ENCODE measurements at regions of chr19 and their contacts with region 1.

Region 1: GRCh38 chr19:8641908-8642547 is 11.6 kb downstream of the NFILZ start:
- DNase-seq: no peak
- H3K4me3 Mint-ChIP-seq: no peak overlapping the region
- H3K27ac Mint-ChIP-seq: no peak overlapping the region
- H3K4me1 Mint-ChIP-seq: no peaks in the 10 kb centered on the region
- H3K27me3 Mint-ChIP-seq: peaks cover 11% of the 10 kb centered on the region

Region 2: DNA sequence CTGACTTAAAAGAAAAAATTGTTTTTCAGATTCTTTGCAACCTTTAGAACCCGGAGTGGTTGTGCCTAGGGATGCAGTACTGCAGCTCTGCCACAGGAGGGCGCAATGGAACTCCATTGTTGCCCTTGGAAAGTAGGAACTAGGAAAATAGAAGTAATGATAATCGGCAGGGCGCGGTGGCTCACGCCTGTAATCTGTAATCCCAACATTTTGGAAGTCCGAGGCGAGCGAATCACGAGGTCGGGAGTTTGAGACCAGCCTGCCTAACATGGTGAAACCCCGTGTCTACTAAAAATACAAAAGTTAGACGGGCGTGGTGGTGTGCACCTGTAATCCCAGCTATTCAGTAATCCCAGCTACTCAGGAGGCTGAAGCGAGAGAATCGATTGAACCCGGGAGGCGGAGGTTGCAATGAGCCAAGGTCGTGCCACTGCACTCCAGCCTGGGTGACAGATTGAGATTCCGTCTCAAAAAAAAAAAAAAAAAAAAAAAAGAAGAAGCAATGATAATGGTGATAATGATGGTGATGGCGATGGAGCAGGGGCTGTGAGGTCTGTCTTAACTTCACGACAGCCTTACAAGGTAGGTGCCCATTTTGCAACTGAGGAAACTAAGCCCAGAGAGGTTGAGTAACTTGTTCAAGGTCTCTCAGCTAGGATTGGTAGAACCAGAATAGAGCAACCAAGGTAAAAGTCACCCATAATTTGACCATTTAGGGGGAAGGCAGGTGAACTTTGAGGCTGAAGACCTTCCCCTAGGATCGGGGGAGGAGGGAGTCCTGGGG is 26.0 kb before region 1 on chr19:
- CTCF ChIA-PET with region 1: interaction called, 12 read pairs
- POLR2A ChIA-PET with region 1: no interaction called
- DNase-seq: peak; percentile 61
- H3K4me3 Mint-ChIP-seq: no peak overlapping the region
- H3K27ac Mint-ChIP-seq: no peak overlapping the region
- H3K4me1 Mint-ChIP-seq: peaks cover 4% of the 10 kb centered on the region
- H3K27me3 Mint-ChIP-seq: peaks cover 4% of the 10 kb centered on the region

Region 3: DNA sequence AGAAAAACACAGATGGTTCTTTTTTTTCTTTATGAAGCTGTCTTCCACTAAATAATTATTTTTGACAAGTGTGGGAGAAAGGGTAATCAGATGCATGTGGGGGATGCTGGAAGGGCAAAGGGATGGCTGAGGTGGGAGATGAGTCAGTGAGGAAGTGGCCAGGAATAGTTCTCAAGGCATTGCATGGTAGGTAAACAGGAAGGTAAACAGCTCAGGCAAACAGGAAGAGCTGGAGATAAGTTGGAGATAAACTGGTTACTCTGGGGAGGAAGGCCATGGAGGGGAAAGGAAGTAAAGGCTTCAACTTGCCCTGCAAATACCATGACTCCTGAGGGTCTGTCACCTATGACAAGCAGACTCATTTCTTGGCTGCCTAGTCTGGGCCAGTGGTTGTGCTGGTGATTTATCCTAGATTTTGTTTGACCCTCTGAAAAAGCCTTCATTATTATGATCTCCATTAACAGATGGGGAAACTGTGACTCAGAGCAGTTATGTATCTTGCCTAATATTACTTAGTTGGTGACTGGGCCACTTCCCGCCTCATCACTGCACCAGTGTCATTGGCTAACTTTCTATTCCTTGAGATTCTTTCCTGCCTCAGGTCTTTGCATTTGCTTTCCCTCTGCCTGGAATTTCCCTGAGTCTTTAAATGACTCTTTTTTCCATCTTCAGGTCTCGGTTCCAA is 39.5 kb after region 1 on chr19:
- CTCF ChIA-PET with region 1: no interaction called
- POLR2A ChIA-PET with region 1: no interaction called
- DNase-seq: no peak
- H3K4me3 Mint-ChIP-seq: no peak overlapping the region
- H3K27ac Mint-ChIP-seq: peak overlapping the region; percentile 61
- H3K4me1 Mint-ChIP-seq: peaks cover 40% of the 10 kb centered on the region
- H3K27me3 Mint-ChIP-seq: peaks cover 3% of the 10 kb centered on the region